CD4-positive, alpha-beta T cell (primary cell): ENCODE measurements at regions of chr5 and their contacts with region 1.

Region 1: DNA sequence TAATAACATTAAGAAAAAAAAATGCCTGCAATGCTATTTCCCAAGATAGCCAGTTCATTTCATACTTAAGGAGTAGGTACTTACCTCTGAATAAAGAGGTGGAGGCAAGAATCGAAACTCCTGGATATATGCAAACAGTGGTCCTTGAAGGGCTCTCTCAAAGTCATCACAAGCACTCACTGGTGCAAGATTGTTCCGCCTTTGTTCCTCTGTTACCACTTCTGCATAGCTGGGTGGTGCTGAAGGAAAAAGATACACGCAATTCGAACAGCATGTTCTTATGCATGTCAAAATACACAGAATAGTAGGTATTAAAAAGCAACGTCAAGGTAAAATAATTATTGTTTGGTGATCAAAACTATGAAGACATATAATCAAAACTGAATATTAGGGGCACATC is 9.5 kb downstream of the ARRDC3 start:
- DNase-seq: no peak
- ATAC-seq: no peak
- H3K4me3 ChIP-seq: no peak overlapping the region
- H3K4me3 Mint-ChIP-seq: peak overlapping the region; percentile 15
- H3K27ac ChIP-seq: no peak overlapping the region
- H3K27ac Mint-ChIP-seq: no peak overlapping the region
- H3K4me1 ChIP-seq: peaks cover 6% of the 10 kb centered on the region
- H3K4me1 Mint-ChIP-seq: peaks cover 71% of the 10 kb centered on the region
- H3K27me3 ChIP-seq: no peaks in the 10 kb centered on the region
- H3K27me3 Mint-ChIP-seq: no peaks in the 10 kb centered on the region
- CTCF ChIP-seq: no peak

Region 2: DNA sequence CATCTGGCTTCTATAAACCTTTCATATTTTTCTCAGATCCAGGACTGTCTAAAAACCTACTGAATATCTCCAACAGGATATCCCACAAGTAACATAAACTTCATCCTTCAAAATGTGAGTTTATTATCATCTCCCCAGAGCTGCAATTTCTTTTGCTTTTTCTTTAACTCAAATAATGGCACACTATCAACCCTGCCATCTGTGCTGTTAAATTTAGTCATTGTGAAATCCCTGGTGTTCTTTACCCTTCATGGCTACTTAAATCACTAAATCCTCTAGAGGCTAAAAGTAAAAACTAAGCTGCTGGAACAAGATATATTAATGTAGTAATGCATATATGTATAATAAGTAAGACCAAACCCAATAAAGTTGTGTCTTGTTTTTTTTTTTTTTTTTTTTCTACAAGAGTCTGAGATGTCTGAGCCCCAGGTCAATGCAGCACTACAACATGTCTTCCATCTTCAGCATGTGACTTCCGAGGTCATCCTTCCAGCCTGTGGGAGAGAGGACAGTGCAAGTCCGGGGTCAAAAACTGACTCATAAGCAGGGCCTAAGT is 452.1 kb before region 1 on chr5:
- CTCF ChIA-PET with region 1: no interaction called
- POLR2A ChIA-PET with region 1: no interaction called
- intact Hi-C with region 1: no loop called
- DNase-seq: no peak
- ATAC-seq: no peak
- H3K4me3 ChIP-seq: no peak overlapping the region
- H3K4me3 Mint-ChIP-seq: no peak overlapping the region
- H3K27ac ChIP-seq: no peak overlapping the region
- H3K27ac Mint-ChIP-seq: no peak overlapping the region
- H3K4me1 ChIP-seq: no peaks in the 10 kb centered on the region
- H3K4me1 Mint-ChIP-seq: no peaks in the 10 kb centered on the region
- H3K27me3 ChIP-seq: no peaks in the 10 kb centered on the region
- H3K27me3 Mint-ChIP-seq: peaks cover 7% of the 10 kb centered on the region
- CTCF ChIP-seq: no peak

Region 3: DNA sequence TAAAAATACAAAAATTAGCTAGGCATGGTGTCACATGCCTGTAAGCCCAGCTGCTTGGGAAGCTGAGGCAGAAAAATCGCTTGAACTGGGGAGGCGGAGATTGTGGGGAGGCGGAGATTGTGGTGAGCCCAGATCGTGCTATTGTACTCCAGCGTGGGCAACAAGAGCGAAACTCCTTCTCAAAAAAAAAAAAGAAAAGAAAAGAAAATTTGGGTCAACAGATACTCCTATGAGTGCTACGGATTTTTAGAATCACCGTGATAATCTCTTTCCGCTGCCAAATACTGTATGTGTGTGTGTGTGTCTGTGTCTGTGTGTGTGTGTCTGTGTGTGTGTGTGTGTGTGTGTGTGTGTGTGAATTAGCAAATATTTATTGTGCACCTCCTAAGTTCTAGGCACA is 54.9 kb before region 1 on chr5:
- CTCF ChIA-PET with region 1: no interaction called
- POLR2A ChIA-PET with region 1: interaction called, 3 read pairs
- intact Hi-C with region 1: loop called in 1 of 2 experiments (anchors 5 kb)
- DNase-seq: peak in 7 of 14 experiments; percentile 10 to 63 (median 40)
- ATAC-seq: no peak
- H3K4me3 ChIP-seq: no peak overlapping the region
- H3K4me3 Mint-ChIP-seq: no peak overlapping the region
- H3K27ac ChIP-seq: no peak overlapping the region
- H3K27ac Mint-ChIP-seq: no peak overlapping the region
- H3K4me1 ChIP-seq: peaks cover 21% of the 10 kb centered on the region
- H3K4me1 Mint-ChIP-seq: peaks cover 22% of the 10 kb centered on the region
- H3K27me3 ChIP-seq: no peaks in the 10 kb centered on the region
- H3K27me3 Mint-ChIP-seq: no peaks in the 10 kb centered on the region
- CTCF ChIP-seq: no peak